Vagina (tissue), 2 donors: ENCODE measurements at regions of chr10 and their contacts with region 1.

Region 1: GRCh38 chr10:120942806-120943413 is 91.7 kb downstream of the WDR11 start:
- DNase-seq: peak in 1 of 2 donors; percentile 87
- H3K4me3 ChIP-seq: no peak overlapping the region
- H3K27ac ChIP-seq: no peak overlapping the region
- H3K4me1 ChIP-seq: no peaks in the 10 kb centered on the region
- H3K27me3 ChIP-seq: no peaks in the 10 kb centered on the region
- CTCF ChIP-seq: peak; percentile 92 to 96 (median 93)
- POLR2A ChIP-seq: no peak

Region 2: DNA sequence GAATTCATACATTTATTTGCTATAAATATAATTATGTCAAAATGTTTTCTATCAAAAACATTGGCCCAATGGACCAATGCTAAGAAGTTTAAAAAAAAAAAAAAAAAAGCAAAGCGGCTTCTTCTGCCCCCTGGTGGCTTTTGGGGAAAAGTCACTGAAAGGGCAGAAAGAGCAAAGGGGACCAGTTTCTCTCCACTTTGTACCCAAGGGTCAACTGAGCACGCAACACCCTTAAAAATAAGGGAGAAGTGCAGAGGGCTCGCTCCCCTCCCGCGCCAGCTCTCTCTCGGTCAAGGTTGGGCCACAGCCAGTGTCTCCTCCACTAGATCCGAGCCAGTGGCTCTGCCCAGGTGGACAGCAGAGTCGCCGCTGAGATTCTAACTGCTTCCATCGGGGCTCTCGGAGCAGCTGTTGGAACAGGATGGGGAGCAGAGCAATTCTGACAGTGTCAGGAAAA is 791.7 kb after region 1 on chr10:
- intact Hi-C with region 1: loop called (anchors 5 kb)
- DNase-seq: no peak
- H3K4me3 ChIP-seq: no peak overlapping the region
- H3K27ac ChIP-seq: no peak overlapping the region
- H3K4me1 ChIP-seq: no peaks in the 10 kb centered on the region
- H3K27me3 ChIP-seq: no peaks in the 10 kb centered on the region
- CTCF ChIP-seq: peak in 2 of 3 experiments; percentile 28 to 60
- POLR2A ChIP-seq: no peak

Region 3: DNA sequence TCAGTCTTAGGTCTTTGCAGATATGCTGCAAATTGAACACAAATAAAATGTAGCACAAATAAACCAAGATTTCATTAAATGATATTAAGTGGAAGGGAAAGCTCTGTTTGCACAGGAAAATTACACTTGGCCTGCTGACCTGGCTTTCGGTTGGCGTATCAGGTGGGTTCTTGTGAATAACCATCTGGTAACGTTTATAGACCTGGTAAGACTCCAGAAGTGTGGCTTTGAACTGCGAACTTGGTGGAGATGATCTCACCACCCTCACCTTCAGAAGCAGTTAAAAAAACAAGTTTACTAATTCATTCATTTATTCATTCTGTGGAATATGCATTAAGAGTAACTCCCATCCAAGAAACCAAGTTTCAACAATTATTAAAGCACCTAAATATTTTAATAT is 956.8 kb after region 1 on chr10:
- intact Hi-C with region 1: loop called (anchors 10 kb)
- DNase-seq: no peak
- H3K4me3 ChIP-seq: no peak overlapping the region
- H3K27ac ChIP-seq: no peak overlapping the region
- H3K4me1 ChIP-seq: peaks cover 4% of the 10 kb centered on the region
- H3K27me3 ChIP-seq: no peaks in the 10 kb centered on the region
- CTCF ChIP-seq: no peak
- POLR2A ChIP-seq: no peak